ENCODE measurements at regions of chr11 and their contacts with region 1.

Region 1: DNA sequence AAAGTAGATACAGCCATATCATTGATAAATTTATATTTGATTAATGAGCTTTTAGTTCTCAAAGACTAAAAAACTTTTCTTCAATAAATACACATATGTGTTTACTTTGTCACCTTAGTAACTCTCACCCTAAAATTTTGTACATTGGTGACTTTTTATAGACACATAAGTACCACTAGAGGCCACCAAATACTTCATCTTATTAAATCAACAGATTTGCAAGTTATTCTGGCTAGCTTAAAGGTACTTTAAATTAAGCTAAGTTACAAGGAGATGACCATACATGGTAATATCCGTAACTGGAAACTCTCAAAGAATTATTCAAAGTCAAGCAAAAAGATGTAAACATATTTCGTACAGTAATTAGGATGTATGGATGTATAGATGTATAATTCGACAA is 112.2 kb downstream of the SBF2 start:
- DNase-seq: no peak
- H3K4me3 ChIP-seq: no peak overlapping the region
- CTCF ChIP-seq: no peak

Region 2: GRCh38 chr11:10044618-10045017 is 137.2 kb before region 1 on chr11:
- CTCF ChIA-PET with region 1: no interaction called
- POLR2A ChIA-PET with region 1: no interaction called
- DNase-seq: no peak
- H3K4me3 ChIP-seq: no peak overlapping the region
- CTCF ChIP-seq: no peak

Region 3: GRCh38 chr11:10164621-10165020 is 17.2 kb before region 1 on chr11:
- CTCF ChIA-PET with region 1: interaction called, 30 read pairs
- POLR2A ChIA-PET with region 1: no interaction called
- DNase-seq: no peak
- H3K4me3 ChIP-seq: no peak overlapping the region
- CTCF ChIP-seq: no peak

Region 4: DNA sequence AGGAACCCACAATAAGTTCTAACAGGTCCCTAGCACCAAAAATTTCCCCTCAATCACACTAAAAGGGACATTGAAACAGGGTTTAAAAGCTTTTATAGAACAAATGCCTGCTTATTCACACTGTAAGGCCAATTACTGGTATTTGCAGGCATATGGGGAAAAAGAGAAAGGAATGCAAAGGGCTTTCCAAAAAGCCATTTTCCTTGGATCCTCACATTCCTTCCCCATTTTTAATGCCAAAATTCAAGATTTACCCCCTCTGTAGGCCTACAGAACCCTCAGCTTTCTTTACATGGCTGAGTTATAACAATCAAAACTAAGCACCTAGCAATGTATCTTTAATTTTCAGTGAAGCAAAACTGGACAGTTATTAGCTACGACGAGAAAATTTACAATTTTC is 10.2 kb after region 1 on chr11:
- CTCF ChIA-PET with region 1: interaction called, 17 read pairs
- POLR2A ChIA-PET with region 1: no interaction called
- DNase-seq: no peak
- H3K4me3 ChIP-seq: no peak overlapping the region
- CTCF ChIP-seq: no peak

Region 5: DNA sequence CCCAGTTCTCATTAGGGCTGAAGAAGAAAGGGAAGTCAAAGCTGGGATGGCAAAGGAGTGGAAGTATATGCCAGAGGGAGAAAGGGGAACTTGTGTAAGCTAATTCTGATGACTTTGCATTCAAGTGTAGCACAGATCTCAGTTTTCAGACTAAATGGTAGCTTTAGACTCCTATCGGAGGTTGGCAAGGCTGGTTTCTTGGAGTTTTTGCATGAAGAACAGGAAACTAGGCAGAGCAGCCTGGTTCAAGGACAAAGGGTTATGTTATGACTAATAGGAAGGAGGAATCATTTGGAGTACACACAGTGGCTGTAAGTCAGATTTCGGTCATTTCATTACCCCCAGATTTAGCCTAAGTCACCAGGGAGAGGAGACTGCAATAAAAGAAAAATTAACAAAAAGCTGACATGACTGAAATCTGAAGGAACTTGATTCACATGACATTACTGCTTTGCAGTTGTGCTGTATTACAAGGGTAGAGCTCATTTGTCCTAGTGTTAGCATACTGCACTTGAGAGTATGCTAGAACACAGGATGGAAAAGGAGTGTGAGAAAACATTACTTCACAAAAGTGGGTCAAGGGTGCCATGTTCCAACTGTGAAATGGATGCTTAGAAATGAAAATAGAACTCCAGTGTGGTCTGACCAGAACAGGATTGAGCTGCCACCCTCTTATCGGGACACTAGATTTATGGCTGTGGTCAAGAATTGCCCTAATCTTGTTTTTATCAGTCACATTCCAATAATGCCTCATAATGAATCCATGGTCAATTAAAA is 146.7 kb after region 1 on chr11:
- CTCF ChIA-PET with region 1: interaction called, 18 read pairs
- POLR2A ChIA-PET with region 1: no interaction called
- DNase-seq: no peak
- H3K4me3 ChIP-seq: no peak overlapping the region
- CTCF ChIP-seq: no peak

Measured in AG04449 (cell line).